ENCODE measurements at regions of chr4 and their contacts with region 1.

Region 1: DNA sequence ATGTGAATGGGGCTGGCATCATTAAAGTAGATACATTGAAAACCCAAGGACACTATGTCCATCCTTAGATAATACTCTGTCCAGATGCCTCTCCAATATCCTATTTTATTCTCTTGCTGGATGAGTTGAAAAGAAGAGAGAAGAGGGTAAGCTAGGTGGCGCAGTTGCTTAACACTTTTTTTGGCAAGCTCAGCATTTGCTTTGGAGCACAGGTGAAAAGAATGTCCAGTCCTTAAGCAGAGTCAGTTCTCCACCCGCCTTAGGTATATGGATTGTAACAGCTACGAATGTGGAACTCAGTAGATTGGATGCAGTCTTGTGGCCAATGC is 208.4 kb downstream of the NWD2 start:
- H3K4me3 Mint-ChIP-seq: peak overlapping the region; percentile 4
- H3K27ac Mint-ChIP-seq: no peak overlapping the region
- H3K4me1 Mint-ChIP-seq: peaks cover 6% of the 10 kb centered on the region
- H3K27me3 Mint-ChIP-seq: peaks cover 56% of the 10 kb centered on the region

Region 2: DNA sequence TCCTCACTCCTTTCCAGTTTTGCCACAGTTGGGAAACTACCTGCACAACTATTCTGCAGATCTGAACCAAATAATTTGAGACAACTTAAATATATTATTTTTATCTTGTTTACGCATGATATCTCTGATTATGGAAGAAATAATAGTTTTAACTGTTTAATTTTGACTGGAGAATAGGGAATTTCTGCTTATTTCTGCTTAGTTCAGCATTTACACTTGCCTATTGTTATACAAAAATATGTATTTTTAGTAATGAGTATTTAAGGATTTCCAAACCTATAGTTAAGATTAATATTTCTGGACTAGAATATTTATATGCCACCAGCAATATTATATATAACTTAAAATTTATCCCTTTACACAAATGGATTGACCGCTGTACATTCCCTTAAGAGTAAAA is 82.9 kb before region 1 on chr4:
- intact Hi-C with region 1: no loop called
- H3K4me3 Mint-ChIP-seq: no peak overlapping the region
- H3K27ac Mint-ChIP-seq: no peak overlapping the region
- H3K4me1 Mint-ChIP-seq: peaks cover 19% of the 10 kb centered on the region
- H3K27me3 Mint-ChIP-seq: no peaks in the 10 kb centered on the region

Region 3: GRCh38 chr4:37540486-37540885 is 87.6 kb after region 1 on chr4:
- intact Hi-C with region 1: no loop called
- H3K4me3 Mint-ChIP-seq: no peak overlapping the region
- H3K27ac Mint-ChIP-seq: no peak overlapping the region
- H3K4me1 Mint-ChIP-seq: no peaks in the 10 kb centered on the region
- H3K27me3 Mint-ChIP-seq: no peaks in the 10 kb centered on the region

Region 4: DNA sequence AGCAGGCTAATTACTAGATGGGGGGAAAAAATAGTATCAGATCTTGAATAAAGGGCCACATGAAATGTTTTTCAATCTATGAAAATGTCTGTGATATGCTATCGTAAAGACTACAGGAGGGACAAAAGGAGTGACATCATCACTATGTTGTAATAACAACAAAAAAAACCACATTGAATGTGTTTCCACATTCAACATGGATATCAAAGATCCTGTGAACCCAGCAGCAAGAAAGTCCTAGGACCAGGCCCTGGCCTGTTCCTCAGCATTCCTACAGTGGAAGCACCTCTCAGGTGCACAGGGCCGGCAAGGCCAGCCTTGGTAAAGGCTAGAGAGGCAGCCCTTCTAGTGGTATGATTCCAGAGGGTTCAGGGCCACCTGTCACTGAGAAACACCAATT is 114.9 kb after region 1 on chr4:
- intact Hi-C with region 1: loop called (anchors 2 kb)
- H3K4me3 Mint-ChIP-seq: no peak overlapping the region
- H3K27ac Mint-ChIP-seq: peak overlapping the region; percentile 43
- H3K4me1 Mint-ChIP-seq: peaks cover 15% of the 10 kb centered on the region
- H3K27me3 Mint-ChIP-seq: peaks cover 3% of the 10 kb centered on the region

Region 5: GRCh38 chr4:37793562-37793961 is 340.6 kb after region 1 on chr4:
- intact Hi-C with region 1: loop called (anchors 5 kb)
- H3K4me3 Mint-ChIP-seq: no peak overlapping the region
- H3K27ac Mint-ChIP-seq: no peak overlapping the region
- H3K4me1 Mint-ChIP-seq: peaks cover 26% of the 10 kb centered on the region
- H3K27me3 Mint-ChIP-seq: no peaks in the 10 kb centered on the region

Region 6: GRCh38 chr4:38266616-38267015 is 813.7 kb after region 1 on chr4:
- intact Hi-C with region 1: no loop called
- H3K4me3 Mint-ChIP-seq: no peak overlapping the region
- H3K27ac Mint-ChIP-seq: no peak overlapping the region
- H3K4me1 Mint-ChIP-seq: peaks cover 20% of the 10 kb centered on the region
- H3K27me3 Mint-ChIP-seq: no peaks in the 10 kb centered on the region